ENCODE measurements at regions of chr1 and their contacts with region 1.

Region 1: GRCh38 chr1:235415008-235415904 is 48.0 kb downstream of the TBCE start:
- DNase-seq: peak; percentile 72
- CTCF ChIP-seq: peak; percentile 78

Region 2: GRCh38 chr1:234962340-234962989 is 452.8 kb before region 1 on chr1:
- in situ Hi-C with region 1: no loop called
- DNase-seq: peak; percentile 73
- CTCF ChIP-seq: no peak

Region 3: GRCh38 chr1:235105051-235106043 is 309.9 kb before region 1 on chr1:
- in situ Hi-C with region 1: loop called (anchors 10 kb)
- DNase-seq: peak; percentile 82
- CTCF ChIP-seq: no peak

Region 4: DNA sequence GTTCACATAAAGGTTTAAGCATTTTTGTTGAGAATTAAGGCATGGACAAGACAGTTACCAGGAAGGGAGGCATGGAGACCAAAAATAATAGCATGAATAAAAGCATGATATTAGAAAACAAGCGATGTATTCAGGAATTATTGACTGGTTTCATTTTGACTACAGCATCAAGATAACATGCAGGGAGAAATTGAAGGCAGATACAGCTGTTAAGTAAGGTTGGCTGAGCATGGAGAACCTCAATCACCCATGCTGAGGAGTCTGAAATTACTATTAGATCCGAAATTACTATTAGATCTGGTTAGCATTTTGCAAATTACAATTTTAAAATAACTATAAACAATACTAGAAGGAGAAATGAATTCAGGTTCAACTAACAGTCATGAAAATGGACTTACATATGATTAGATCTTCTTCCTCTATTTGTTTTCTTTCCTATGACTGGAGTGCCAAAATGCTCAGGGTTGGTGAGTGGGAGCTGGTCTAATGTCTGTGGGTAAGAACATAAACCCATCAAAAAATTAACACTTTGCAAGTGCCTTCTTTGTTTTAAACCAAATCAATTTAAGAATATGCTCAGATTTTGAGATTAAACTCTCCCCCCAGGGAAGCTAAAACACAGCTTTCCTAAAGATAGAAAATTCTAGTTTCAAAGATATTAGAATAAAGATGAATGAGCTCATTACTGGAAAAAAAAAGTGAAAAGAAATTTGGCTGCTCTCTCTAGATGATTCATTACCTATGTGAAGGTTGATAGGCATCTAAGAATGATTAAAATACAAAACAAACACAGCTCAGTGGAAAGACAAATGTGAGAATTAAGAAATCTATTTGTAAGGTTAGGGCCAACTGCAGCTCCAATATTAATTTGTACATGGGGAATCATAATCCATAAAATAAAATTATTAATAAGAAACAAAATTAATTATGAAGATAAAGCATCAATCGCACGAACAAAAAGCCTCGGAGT is 168.9 kb before region 1 on chr1:
- in situ Hi-C with region 1: loop called (anchors 5 kb)
- DNase-seq: peak; percentile 26
- CTCF ChIP-seq: no peak

Measured in GM13977 (cell line).